ENCODE measurements at regions of chr15 and their contacts with region 1.

Region 1: DNA sequence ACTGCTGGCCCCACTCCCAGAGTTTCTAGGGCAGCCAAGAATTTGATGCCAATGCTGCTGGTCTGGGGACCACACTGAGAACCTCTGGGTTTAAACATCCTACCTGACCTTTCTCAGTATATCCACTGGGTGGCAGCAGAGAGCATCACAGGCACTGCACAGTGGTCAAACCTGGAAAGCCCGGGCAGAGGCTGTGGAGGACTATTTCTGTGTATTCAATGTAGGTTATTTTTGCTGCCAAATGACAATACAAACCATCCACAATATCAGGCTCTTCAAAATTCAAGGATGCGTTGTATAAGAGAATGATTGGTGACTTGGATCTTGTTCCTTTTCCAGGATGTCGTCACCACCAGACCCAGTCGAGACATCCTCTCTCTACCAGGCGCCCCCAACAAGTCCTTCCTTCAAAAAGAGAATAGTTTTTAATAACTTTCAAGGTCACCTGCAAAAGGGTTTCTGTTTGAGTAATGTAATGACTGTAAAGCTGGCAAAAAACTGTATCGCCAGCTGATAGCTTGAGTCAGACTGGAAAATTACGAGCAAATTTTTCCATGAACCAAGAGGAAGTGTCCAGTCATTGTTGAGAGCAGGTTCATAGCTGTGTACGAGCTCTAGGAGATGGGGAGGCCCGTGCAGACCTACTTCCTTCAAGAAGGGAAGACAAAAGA is 30.5 kb upstream of the MYZAP start:
- DNase-seq: peak; percentile 10
- H3K4me3 ChIP-seq: no peak overlapping the region
- CTCF ChIP-seq: peak; percentile 87

Region 2: GRCh38 chr15:57158589-57158988 is 402.6 kb before region 1 on chr15:
- CTCF ChIA-PET with region 1: no interaction called
- POLR2A ChIA-PET with region 1: no interaction called
- DNase-seq: no peak
- H3K4me3 ChIP-seq: no peak overlapping the region
- CTCF ChIP-seq: no peak

Region 3: DNA sequence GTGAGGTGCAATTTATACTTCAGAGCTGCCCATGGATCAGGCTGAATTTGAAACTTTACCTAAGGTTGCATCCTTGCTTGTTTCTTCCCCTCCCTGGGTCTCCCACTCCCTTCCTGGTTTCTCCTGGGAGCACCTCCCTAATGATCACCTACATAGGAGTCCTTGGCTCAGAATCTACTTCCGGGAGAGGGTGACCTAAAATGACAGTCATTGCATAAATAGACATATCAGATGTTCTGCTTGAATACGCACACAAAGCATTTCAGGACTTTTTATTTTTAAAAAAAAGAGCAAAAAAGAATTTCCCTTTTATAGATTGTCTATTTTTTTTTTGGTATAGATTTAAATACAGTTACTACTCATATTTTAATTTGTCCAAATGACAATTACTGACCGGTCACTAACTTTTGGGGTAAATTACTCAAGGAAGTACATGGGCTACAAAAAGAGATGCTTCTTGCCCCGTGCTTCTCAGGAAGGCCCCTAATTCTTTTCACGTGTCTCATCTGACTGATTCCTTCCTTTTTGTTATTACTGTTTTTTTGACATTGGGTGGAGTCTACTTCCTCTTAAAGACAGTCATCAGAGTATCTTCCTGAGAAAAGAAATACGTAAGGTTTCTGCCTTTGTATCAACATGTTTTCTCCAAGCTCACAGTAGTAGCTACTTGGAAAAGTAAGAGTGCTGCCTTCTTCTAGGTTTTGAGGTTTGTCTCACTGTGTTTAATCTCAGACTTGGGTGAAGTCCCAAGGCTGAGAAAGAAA is 25.7 kb after region 1 on chr15:
- CTCF ChIA-PET with region 1: interaction called, 27 read pairs
- POLR2A ChIA-PET with region 1: no interaction called
- DNase-seq: no peak
- H3K4me3 ChIP-seq: no peak overlapping the region
- CTCF ChIP-seq: no peak

Region 4: DNA sequence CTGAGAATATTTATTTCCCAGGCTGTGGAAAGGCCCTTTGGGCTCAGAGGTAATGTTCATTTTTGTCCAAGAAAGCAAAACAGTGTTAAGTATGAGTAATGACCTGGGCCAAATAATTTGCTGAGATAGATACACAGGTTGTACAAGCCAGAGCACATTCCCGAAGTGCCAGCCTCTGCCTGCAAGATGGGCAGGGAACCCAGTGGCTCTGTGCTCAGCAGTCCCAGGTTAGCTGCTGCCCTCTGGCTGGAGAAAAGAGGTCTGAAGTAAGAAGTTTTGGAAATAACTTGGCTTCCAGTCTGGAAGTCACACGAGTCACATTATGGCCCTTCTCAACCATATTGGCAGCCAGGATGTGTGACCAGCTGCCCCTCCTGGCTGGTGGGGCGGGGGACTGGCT is 50.8 kb after region 1 on chr15:
- CTCF ChIA-PET with region 1: interaction called, 11 read pairs
- POLR2A ChIA-PET with region 1: no interaction called
- DNase-seq: no peak
- H3K4me3 ChIP-seq: no peak overlapping the region
- CTCF ChIP-seq: no peak

Region 5: DNA sequence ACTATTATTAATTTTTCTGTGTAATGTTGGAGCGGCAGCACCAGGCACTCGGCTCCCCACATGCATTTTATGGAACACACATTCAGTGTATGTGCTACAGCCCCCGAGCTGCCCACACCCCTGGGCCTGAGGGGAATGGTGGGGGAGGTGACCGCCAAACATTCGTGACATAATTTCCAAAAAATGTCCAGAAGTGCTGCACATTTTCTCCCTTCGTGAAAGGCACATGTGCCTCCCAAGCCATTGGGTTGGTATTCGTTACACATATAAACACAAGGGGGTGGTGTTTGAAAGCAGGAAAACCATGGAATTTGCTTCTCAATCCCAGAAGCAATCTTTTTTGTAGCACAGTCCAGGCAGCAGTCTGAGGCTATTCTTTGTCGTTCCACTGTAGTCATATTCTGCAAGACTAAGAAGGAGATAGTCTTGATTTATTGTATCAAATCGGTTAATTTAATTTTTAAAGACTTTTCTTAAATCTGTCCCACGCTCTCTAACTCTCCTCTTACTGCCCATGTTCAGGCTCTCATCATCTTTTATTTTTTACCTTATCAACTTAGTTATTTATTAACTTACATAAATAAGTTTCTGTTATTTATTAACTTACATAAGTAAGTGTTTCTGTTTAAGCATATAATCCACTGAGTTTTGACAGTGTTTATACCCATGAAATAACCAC is 106.1 kb after region 1 on chr15:
- CTCF ChIA-PET with region 1: interaction called, 10 read pairs
- POLR2A ChIA-PET with region 1: no interaction called
- DNase-seq: peak; percentile 21
- H3K4me3 ChIP-seq: no peak overlapping the region
- CTCF ChIP-seq: peak; percentile 51

Region 6: DNA sequence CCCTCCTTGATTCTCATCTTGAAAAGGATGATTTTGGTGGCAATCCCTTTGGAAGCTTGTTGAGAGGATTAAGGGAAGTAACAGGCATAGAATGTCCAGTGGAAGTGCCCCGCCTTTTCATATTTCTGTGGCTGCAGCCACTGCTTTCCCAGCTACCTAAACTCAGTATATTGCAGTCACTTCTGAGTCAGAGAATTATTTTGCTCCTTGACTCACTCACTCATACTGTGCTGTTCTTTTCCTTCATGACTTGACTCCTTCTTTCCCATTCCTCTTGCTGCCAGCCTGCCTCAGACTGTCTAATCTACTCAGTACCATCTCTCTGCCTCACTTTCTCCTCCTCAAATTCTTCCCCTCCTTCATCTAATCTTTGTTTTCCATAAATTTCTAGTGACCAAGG is 118.8 kb after region 1 on chr15:
- CTCF ChIA-PET with region 1: interaction called, 11 read pairs
- POLR2A ChIA-PET with region 1: no interaction called
- DNase-seq: no peak
- H3K4me3 ChIP-seq: no peak overlapping the region
- CTCF ChIP-seq: no peak

Region 7: GRCh38 chr15:57797110-57797509 is 235.9 kb after region 1 on chr15:
- CTCF ChIA-PET with region 1: no interaction called
- POLR2A ChIA-PET with region 1: no interaction called
- DNase-seq: no peak
- H3K4me3 ChIP-seq: no peak overlapping the region
- CTCF ChIP-seq: no peak

Region 8: GRCh38 chr15:58852347-58852746 is 1291.2 kb after region 1 on chr15:
- CTCF ChIA-PET with region 1: no interaction called
- POLR2A ChIA-PET with region 1: no interaction called
- DNase-seq: no peak
- H3K4me3 ChIP-seq: no peak overlapping the region
- CTCF ChIP-seq: no peak

Measured in AG04449 (cell line).